Ovary (tissue), 10 donors: ENCODE measurements at regions of chr2 and their contacts with region 1.

Region 1: DNA sequence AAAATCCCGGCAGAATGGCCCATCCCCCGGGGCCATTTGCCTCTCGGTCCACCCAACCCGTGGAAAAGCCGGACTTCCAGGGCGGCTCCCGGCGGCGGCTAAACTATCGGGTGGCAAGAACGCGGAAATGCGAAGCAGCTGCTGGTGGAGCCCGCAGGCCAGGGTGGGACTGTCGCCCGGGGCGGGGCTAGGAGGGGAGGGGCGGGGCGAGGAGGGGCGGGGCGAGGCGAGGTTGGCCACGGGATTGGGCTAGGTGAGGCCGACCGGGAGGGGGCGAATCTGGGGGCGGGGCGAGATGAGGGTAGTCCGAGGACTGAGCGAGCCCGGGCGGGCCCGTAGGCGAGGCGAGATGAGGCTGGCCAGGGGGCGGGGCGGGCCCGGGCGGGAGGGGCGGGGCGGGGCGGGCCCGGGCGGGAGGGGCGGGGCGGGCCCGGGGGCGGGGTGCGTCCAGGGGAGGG is 315 bp upstream of the SLC66A3 start:
- DNase-seq: peak; percentile 98 to 100 (median 99)
- H3K4me3 ChIP-seq: peak overlapping the region; percentile 41
- H3K27ac ChIP-seq: peak overlapping the region in 1 of 2 donors; percentile 87
- H3K4me1 ChIP-seq: peaks cover 2% of the 10 kb centered on the region
- H3K27me3 ChIP-seq: no peaks in the 10 kb centered on the region
- CTCF ChIP-seq: no peak
- EP300 ChIP-seq: no peak
- POLR2A ChIP-seq: peak; percentile 8

Region 2: GRCh38 chr2:9251154-9252001 is 1903.6 kb before region 1 on chr2:
- intact Hi-C with region 1: no loop called
- DNase-seq: no peak
- H3K4me3 ChIP-seq: no peak overlapping the region
- H3K27ac ChIP-seq: no peak overlapping the region
- H3K4me1 ChIP-seq: peaks cover 16% of the 10 kb centered on the region
- H3K27me3 ChIP-seq: no peaks in the 10 kb centered on the region
- CTCF ChIP-seq: no peak
- EP300 ChIP-seq: no peak
- POLR2A ChIP-seq: no peak

Region 3: GRCh38 chr2:11080253-11081115 is 74.5 kb before region 1 on chr2:
- intact Hi-C with region 1: no loop called
- DNase-seq: no peak
- H3K4me3 ChIP-seq: no peak overlapping the region
- H3K27ac ChIP-seq: no peak overlapping the region
- H3K4me1 ChIP-seq: no peaks in the 10 kb centered on the region
- H3K27me3 ChIP-seq: no peaks in the 10 kb centered on the region
- CTCF ChIP-seq: no peak
- EP300 ChIP-seq: no peak
- POLR2A ChIP-seq: no peak

Region 4: GRCh38 chr2:11344342-11344955 is 189.5 kb after region 1 on chr2 and contains the start of gene ROCK2:
- intact Hi-C with region 1: loop called in 1 of 4 experiments (anchors 10 kb)
- DNase-seq: peak; percentile 88 to 93 (median 89)
- H3K4me3 ChIP-seq: peak within 1 kb of the TSS; percentile 83
- H3K27ac ChIP-seq: peak within 1 kb of the TSS; percentile 95 to 100
- H3K4me1 ChIP-seq: peaks cover 3% of the 10 kb centered on the region
- H3K27me3 ChIP-seq: no peaks in the 10 kb centered on the region
- CTCF ChIP-seq: no peak
- EP300 ChIP-seq: no peak
- POLR2A ChIP-seq: peak; percentile 53
- total RNA-seq, gene ROCK2: 40.1 to 71.9 (median 52.7) TPM